GM12878 (cell line): ENCODE measurements at regions of chr11 and their contacts with region 1.

Region 1: GRCh38 chr11:45846974-45847910 is at the start of gene CRY2:
- DNase-seq: peak; percentile 90
- ATAC-seq: peak; percentile 93
- H3K4me3 ChIP-seq: peak within 1 kb of the TSS; percentile 78
- H3K27ac ChIP-seq: peak within 1 kb of the TSS; percentile 48
- H3K4me1 ChIP-seq: peaks cover 5% of the 10 kb centered on the region
- H3K27me3 ChIP-seq: no peaks in the 10 kb centered on the region
- CTCF ChIP-seq: no peak
- EP300 ChIP-seq: peak in 1 of 2 experiments; percentile 58; a peak in 2 of 4 replicates
- POLR2A ChIP-seq: peak; percentile 99
- RAD21 ChIP-seq: no peak
- polyA plus RNA-seq, gene CRY2: 1.2 to 1.4 TPM

Region 2: GRCh38 chr11:45804761-45805304 is 42.4 kb before region 1 on chr11 and contains the start of gene SLC35C1:
- CTCF ChIA-PET with region 1: interaction called, 12 read pairs
- POLR2A ChIA-PET with region 1: interaction called, 27 read pairs
- RAD21 ChIA-PET with region 1: interaction called, 23 read pairs
- SMC1A ChIA-PET with region 1: interaction called, 9 read pairs
- in situ Hi-C with region 1: no loop called
- intact Hi-C with region 1: loop called (anchors 2 kb)
- DNase-seq: peak; percentile 63
- ATAC-seq: peak; percentile 97
- H3K4me3 ChIP-seq: peak within 1 kb of the TSS; percentile 100
- H3K27ac ChIP-seq: peak within 1 kb of the TSS; percentile 47
- H3K4me1 ChIP-seq: peaks cover 23% of the 10 kb centered on the region
- H3K27me3 ChIP-seq: no peaks in the 10 kb centered on the region
- CTCF ChIP-seq: peak in 2 of 3 experiments; percentile 21 to 31; a peak in 3 of 6 replicates
- EP300 ChIP-seq: no peak
- POLR2A ChIP-seq: peak; percentile 85
- RAD21 ChIP-seq: no peak
- polyA plus RNA-seq, gene SLC35C1: 0.55 to 0.95 TPM

Region 3: DNA sequence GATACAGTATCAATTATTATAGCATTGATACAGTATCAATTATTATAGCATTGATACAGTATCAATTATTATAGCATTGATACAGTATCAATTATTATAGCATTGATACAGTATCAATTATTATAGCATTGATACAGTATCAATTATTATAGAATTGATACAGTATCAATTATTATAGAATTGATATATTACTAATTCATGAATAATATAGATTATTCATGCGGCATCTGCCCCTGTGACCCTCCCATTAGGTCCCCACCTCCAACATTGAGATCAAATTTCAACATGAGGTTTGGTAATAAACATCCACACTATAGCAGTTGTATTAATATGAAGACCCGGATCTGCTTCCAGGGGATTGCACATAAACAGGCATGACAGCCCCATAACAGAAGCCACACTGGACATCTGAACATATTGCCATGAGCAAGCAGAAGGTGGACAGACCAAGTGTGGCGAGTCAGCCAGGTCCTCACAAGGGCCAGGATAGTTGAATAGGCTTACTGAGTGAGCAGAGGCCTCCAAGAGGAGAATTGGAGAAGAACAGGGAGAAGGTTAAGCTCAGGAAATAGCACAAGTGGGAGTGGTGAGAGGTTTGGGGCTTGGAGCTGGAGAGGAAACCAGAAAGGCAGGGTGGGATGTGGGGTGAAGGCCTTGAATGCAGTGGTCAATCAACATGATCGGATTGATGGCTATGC is 31.6 kb before region 1 on chr11:
- CTCF ChIA-PET with region 1: interaction called, 18 read pairs
- POLR2A ChIA-PET with region 1: interaction called, 9 read pairs
- RAD21 ChIA-PET with region 1: interaction called, 13 read pairs
- SMC1A ChIA-PET with region 1: interaction called, 17 read pairs
- in situ Hi-C with region 1: no loop called
- intact Hi-C with region 1: no loop called
- DNase-seq: no peak
- ATAC-seq: no peak
- H3K4me3 ChIP-seq: no peak overlapping the region
- H3K27ac ChIP-seq: no peak overlapping the region
- H3K4me1 ChIP-seq: peaks cover 10% of the 10 kb centered on the region
- H3K27me3 ChIP-seq: no peaks in the 10 kb centered on the region
- CTCF ChIP-seq: no peak
- EP300 ChIP-seq: no peak
- POLR2A ChIP-seq: no peak
- RAD21 ChIP-seq: no peak

Region 4: DNA sequence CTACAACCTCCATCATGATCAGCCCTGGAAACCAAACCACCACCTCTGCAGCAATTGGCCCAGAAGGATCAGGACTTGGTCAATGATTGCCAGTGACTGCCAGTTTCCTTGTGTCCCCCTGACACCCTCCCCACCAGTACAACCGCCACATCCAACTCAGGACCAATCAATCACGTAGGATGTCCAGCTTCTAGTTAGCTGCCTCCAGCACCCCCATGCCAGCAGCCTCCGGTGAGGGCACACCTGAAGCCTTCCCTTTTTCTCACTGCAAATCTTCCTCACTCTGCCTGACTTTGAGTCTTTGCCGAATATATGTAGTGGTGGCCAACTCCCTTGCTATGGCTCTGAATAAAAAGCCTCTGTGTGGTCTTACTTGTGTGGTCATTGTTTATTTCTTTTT is 22.0 kb before region 1 on chr11:
- CTCF ChIA-PET with region 1: interaction called, 14 read pairs
- POLR2A ChIA-PET with region 1: interaction called, 4 read pairs
- RAD21 ChIA-PET with region 1: interaction called, 4 read pairs
- SMC1A ChIA-PET with region 1: interaction called, 17 read pairs
- in situ Hi-C with region 1: no loop called
- intact Hi-C with region 1: no loop called
- DNase-seq: no peak
- ATAC-seq: no peak
- H3K4me3 ChIP-seq: no peak overlapping the region
- H3K27ac ChIP-seq: no peak overlapping the region
- H3K4me1 ChIP-seq: peaks cover 14% of the 10 kb centered on the region
- H3K27me3 ChIP-seq: peaks cover 0 to 5% of the 10 kb centered on the region in 2 experiments; a peak in 1 of 4 replicates
- CTCF ChIP-seq: no peak
- EP300 ChIP-seq: no peak
- POLR2A ChIP-seq: no peak
- RAD21 ChIP-seq: no peak

Region 5: DNA sequence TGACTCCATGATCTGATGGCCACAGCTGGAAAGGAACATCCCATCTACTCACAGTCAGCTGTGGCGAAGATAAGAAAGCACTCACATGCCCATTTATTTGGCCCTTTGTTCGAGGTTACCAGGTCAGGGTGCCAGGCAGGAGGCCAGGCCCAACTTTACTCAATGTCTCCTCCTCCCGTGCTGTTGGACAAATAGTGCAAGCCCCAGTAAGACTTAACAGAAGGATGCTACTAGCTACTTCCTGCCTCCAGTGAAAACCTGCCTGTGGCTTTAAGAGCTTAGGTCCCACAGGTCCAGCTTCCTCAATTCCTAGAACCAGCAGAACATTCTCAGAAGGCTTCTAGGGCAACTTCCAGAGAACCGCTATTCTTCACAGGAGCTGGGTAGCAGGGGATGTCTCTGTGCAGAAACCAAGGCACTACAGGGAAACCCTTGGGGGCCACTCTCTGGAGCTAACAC is 12.9 kb before region 1 on chr11:
- CTCF ChIA-PET with region 1: interaction called, 20 read pairs
- POLR2A ChIA-PET with region 1: interaction called, 4 read pairs
- RAD21 ChIA-PET with region 1: interaction called, 4 read pairs
- SMC1A ChIA-PET with region 1: interaction called, 8 read pairs
- in situ Hi-C with region 1: no loop called
- intact Hi-C with region 1: no loop called
- DNase-seq: no peak
- ATAC-seq: no peak
- H3K4me3 ChIP-seq: no peak overlapping the region
- H3K27ac ChIP-seq: no peak overlapping the region
- H3K4me1 ChIP-seq: no peaks in the 10 kb centered on the region
- H3K27me3 ChIP-seq: no peaks in the 10 kb centered on the region; a peak in 1 of 4 replicates
- CTCF ChIP-seq: no peak
- EP300 ChIP-seq: no peak
- POLR2A ChIP-seq: no peak
- RAD21 ChIP-seq: no peak

Region 6: GRCh38 chr11:45917623-45918330 is 70.5 kb after region 1 on chr11 and contains the start of gene PEX16:
- CTCF ChIA-PET with region 1: no interaction called
- POLR2A ChIA-PET with region 1: interaction called, 10 read pairs
- RAD21 ChIA-PET with region 1: interaction called, 8 read pairs
- SMC1A ChIA-PET with region 1: interaction called, 10 read pairs
- in situ Hi-C with region 1: no loop called
- intact Hi-C with region 1: loop called (anchors 2 kb)
- DNase-seq: peak; percentile 94
- ATAC-seq: peak; percentile 92
- H3K4me3 ChIP-seq: peak within 1 kb of the TSS; percentile 99
- H3K27ac ChIP-seq: peak within 1 kb of the TSS; percentile 92
- H3K4me1 ChIP-seq: peaks cover 18% of the 10 kb centered on the region
- H3K27me3 ChIP-seq: peaks cover 2 to 4% of the 10 kb centered on the region in 2 experiments; a peak in 3 of 4 replicates
- CTCF ChIP-seq: no peak
- EP300 ChIP-seq: no peak; a peak in 1 of 4 replicates
- POLR2A ChIP-seq: peak; percentile 99
- RAD21 ChIP-seq: no peak
- polyA plus RNA-seq, gene PEX16: 1.4 to 5.6 TPM